HCT116 (cell line): ENCODE measurements at regions of chr11 and their contacts with region 1.

Region 1: GRCh38 chr11:35815556-35816315 is 128.1 kb upstream of the LDLRAD3 start:
- DNase-seq: no peak
- ATAC-seq: no peak
- H3K4me3 ChIP-seq: no peak overlapping the region
- H3K27ac ChIP-seq: no peak overlapping the region
- H3K4me1 ChIP-seq: no peaks in the 10 kb centered on the region
- H3K27me3 ChIP-seq: no peaks in the 10 kb centered on the region
- CTCF ChIP-seq: no peak
- POLR2A ChIP-seq: no peak
- RAD21 ChIP-seq: no peak

Region 2: GRCh38 chr11:35641171-35641897 is 174.4 kb before region 1 on chr11:
- CTCF ChIA-PET with region 1: no interaction called
- POLR2A ChIA-PET with region 1: no interaction called
- RAD21 ChIA-PET with region 1: no interaction called
- intact Hi-C with region 1: no loop called
- DNase-seq: no peak
- ATAC-seq: no peak
- H3K4me3 ChIP-seq: no peak overlapping the region
- H3K27ac ChIP-seq: no peak overlapping the region
- H3K4me1 ChIP-seq: no peaks in the 10 kb centered on the region
- H3K27me3 ChIP-seq: no peaks in the 10 kb centered on the region
- CTCF ChIP-seq: no peak
- POLR2A ChIP-seq: no peak
- RAD21 ChIP-seq: no peak

Region 3: GRCh38 chr11:35800970-35801953 is 14.5 kb before region 1 on chr11:
- CTCF ChIA-PET with region 1: no interaction called
- POLR2A ChIA-PET with region 1: no interaction called
- RAD21 ChIA-PET with region 1: no interaction called
- intact Hi-C with region 1: loop called (anchors 1 kb)
- DNase-seq: no peak
- ATAC-seq: no peak
- H3K4me3 ChIP-seq: no peak overlapping the region
- H3K27ac ChIP-seq: no peak overlapping the region
- H3K4me1 ChIP-seq: peaks cover 2 to 23% of the 10 kb centered on the region in 2 experiments; a peak in 2 of 4 replicates
- H3K27me3 ChIP-seq: no peaks in the 10 kb centered on the region
- CTCF ChIP-seq: no peak
- POLR2A ChIP-seq: no peak
- RAD21 ChIP-seq: no peak

Region 4: DNA sequence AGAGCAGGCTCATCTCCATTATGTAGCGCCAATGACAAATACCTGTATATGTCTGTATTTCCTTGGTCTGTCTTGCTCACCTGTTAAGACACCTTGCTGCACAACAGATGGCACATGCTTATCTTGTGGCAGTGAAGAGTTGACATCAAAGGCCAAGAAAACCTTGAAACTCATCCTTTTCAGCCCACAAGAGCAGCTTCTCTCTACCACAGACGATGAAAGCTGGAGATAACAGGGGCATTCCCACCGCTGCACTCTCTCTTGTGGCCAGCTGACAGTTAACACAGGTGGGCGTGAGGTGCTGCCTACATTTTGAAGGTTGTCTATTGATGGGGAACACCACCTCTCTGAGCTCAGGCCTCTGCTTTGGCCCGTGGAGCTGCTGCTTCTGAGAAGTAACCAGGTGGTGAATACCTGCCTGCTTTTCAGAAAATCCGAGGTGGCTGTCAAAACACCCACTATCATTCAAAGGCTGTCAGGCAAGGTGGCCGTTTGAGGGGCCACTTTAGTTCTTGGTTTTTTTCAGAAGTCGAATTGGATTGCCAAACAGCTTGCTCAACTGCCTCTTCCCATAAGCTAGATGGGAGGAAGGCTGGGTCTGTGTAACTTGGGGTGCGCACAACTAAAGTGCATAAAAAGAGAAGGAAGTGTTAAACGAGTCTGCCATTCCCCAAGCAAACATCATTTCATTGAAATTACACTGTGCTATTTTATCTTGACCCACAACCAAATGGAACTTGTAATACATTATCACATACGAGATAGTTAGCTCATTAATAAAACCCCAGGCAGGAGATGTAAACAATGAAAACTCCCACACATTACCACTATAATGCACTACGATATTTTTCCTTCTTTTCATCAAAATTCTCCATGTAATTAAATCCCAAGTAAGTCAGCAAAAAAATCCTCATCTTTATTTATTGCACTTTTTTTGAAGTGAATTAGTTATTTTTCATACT is 869.4 kb after region 1 on chr11:
- CTCF ChIA-PET with region 1: no interaction called
- POLR2A ChIA-PET with region 1: no interaction called
- RAD21 ChIA-PET with region 1: no interaction called
- intact Hi-C with region 1: no loop called
- DNase-seq: no peak
- ATAC-seq: no peak
- H3K4me3 ChIP-seq: no peak overlapping the region
- H3K27ac ChIP-seq: no peak overlapping the region
- H3K4me1 ChIP-seq: no peaks in the 10 kb centered on the region
- H3K27me3 ChIP-seq: peaks cover 19% of the 10 kb centered on the region
- CTCF ChIP-seq: no peak
- POLR2A ChIP-seq: no peak
- RAD21 ChIP-seq: no peak